PC-9 (cell line): ENCODE measurements at regions of chr15 and their contacts with region 1.

Region 1: DNA sequence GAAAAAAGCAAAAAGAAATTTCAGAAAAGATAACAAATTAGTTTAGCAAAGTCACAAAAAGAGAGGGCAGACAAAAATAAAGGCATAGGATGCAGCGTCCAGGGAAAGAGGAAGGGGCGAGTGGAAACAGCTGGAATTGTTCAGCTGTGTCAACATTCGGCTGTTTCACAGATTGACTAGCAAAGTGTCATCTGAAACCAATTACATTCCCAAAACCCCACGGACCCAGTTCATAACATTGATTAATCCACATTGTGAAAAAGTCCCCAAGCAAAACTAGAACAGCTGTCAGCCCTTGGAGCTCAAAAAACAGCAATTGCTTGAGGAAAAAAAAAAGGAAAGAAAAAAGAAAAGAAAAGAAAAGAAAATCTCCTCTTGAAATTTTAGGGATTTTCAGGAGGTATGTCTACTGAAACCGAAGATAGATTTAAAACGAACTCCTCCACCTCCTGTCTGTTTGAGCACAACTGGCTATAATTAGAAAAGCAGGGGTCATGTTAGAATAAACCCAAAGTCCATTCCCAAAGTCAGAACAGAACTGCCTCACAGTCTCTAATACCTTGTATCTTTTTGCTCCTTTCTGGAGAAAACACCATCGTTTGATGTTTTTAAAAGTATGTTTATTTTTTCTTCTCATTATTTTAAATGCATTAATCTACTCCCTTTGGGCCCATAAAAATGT is 159.6 kb downstream of the RORA start:
- DNase-seq: no peak
- H3K4me3 ChIP-seq: no peak overlapping the region
- H3K27ac ChIP-seq: no peak overlapping the region
- H3K4me1 ChIP-seq: no peaks in the 10 kb centered on the region
- H3K27me3 ChIP-seq: no peaks in the 10 kb centered on the region
- CTCF ChIP-seq: no peak

Region 2: DNA sequence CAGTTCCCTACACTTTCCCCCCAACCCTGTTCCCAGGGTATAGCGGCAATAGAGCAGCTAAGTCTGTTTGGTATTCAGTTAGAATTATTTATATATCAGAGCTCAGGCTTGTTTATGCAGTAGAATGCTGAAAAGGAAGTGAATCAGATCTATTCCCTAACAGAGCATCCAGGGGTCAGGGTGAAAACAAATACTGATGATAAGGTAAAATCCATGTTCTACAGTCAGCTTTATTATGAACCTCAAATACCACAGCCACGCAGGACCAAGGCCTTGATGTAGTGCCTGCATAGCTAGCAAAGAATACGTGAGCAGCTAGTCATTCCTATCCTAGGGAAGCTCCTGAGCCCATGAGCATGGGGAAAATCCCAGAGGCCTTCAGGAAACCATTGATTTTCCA is 360.9 kb before region 1 on chr15:
- CTCF ChIA-PET with region 1: interaction called, 10 read pairs
- POLR2A ChIA-PET with region 1: no interaction called
- intact Hi-C with region 1: no loop called
- DNase-seq: no peak
- H3K4me3 ChIP-seq: no peak overlapping the region
- H3K27ac ChIP-seq: no peak overlapping the region
- H3K4me1 ChIP-seq: no peaks in the 10 kb centered on the region
- H3K27me3 ChIP-seq: no peaks in the 10 kb centered on the region
- CTCF ChIP-seq: no peak

Region 3: DNA sequence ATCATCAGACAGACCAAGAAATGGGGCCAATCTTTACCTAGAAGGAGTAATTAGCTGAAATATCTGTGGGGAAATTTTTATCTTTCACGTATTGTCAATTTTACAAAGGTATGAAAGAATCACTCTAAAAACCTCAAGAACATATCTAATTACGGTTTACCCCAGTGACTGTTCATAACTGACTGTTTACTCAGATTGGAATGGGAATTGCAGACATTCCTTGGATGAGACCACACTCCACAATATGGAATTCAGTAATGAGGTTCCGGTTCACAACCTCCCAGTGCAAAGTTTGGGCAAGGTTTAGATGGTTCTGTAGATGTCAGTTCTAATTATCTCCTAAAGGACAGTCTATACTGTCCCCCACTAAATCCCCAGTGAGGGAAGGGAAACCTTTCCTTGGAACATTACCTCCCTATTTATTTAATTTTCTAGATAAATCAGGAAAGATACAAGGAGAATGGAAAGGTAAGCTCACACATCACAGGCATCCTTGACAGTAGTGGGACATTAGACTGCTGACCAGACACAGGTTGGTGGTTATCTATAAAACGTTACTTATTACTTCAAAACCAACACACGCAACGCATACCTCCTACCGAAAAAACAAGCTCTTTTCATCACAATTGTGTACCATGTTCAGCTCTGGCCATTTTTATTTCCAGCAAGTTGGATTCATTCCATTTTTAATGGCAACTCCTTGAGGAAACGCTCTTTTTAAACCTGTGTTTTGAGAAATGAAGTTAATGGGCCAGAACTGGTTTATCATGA is 29.7 kb after region 1 on chr15:
- CTCF ChIA-PET with region 1: no interaction called
- POLR2A ChIA-PET with region 1: no interaction called
- intact Hi-C with region 1: no loop called
- DNase-seq: no peak
- H3K4me3 ChIP-seq: no peak overlapping the region
- H3K27ac ChIP-seq: no peak overlapping the region
- H3K4me1 ChIP-seq: no peaks in the 10 kb centered on the region
- H3K27me3 ChIP-seq: no peaks in the 10 kb centered on the region
- CTCF ChIP-seq: no peak

Region 4: GRCh38 chr15:61118885-61119284 is 49.4 kb after region 1 on chr15:
- CTCF ChIA-PET with region 1: no interaction called
- POLR2A ChIA-PET with region 1: no interaction called
- intact Hi-C with region 1: no loop called
- DNase-seq: no peak
- H3K4me3 ChIP-seq: no peak overlapping the region
- H3K27ac ChIP-seq: no peak overlapping the region
- H3K4me1 ChIP-seq: no peaks in the 10 kb centered on the region
- H3K27me3 ChIP-seq: no peaks in the 10 kb centered on the region
- CTCF ChIP-seq: no peak; the same call in 1 of the 2 replicates